B cell (primary cell): ENCODE measurements at regions of chr3 and their contacts with region 1.

Region 1: DNA sequence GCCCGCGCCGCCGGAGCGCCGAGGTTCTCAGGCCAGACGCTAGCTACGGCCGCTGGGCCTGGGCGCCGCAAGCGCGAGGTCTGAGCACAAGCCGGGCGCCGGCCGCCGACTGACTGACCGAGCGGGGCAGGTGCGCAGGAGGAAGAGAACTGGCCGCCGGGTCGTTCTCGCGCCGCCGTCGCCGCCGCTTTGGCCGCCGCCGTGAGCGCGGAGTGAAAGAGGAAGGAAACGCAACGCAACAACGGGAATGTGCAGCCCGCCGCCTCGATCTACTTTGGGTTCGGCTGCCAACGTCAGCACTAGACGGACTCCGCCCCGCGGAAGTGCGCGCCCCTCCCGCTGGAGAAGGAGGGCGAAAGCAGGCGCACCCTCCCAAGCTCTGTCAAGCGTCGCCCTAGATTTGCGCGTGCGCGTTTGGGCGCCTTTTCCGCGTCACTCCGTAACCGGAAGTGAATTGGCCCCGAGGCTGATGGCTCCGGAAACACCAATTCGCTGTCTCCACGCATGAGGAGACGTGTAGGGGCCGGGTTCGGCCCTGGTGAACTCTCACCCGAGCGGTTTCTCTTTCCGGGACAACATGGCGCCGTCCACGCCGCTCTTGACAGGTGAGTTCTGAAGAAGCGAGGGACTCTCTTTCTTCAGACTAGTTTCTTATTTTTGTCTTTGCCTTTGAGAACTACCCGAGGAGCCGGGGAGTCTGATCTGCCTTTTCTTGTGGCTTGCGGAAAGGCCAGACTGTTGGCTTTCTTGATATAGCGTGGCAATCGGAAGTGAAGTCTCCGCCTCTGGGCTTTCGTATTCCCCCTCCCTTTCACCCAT is at the starts of genes EIF2A and SERP1:
- DNase-seq: peak; percentile 100
- ATAC-seq: peak; percentile 90
- H3K4me3 ChIP-seq: peak within 1 kb of the TSS; percentile 67 to 96 (median 86)
- H3K4me3 Mint-ChIP-seq: peak within 1 kb of the TSS; percentile 93
- H3K27ac ChIP-seq: peak within 1 kb of the TSS; percentile 87 to 98
- H3K27ac Mint-ChIP-seq: peak within 1 kb of the TSS; percentile 99
- H3K4me1 ChIP-seq: peaks cover 11 to 21% of the 10 kb centered on the region in 2 donors
- H3K4me1 Mint-ChIP-seq: peaks cover 47% of the 10 kb centered on the region
- H3K27me3 ChIP-seq: no peaks in the 10 kb centered on the region
- H3K27me3 Mint-ChIP-seq: no peaks in the 10 kb centered on the region
- CTCF ChIP-seq: no peak
- total RNA-seq, gene EIF2A: 78.8 and 83.1 TPM in 2 replicates
- total RNA-seq, gene SERP1: 78.0 and 84.6 TPM in 2 replicates

Region 2: GRCh38 chr3:150384296-150385212 is 161.9 kb before region 1 on chr3:
- CTCF ChIA-PET with region 1: interaction called, 3 read pairs
- POLR2A ChIA-PET with region 1: no interaction called
- intact Hi-C with region 1: loop called (anchors 1 kb)
- DNase-seq: peak; percentile 89
- ATAC-seq: peak; percentile 94
- H3K4me3 ChIP-seq: peak overlapping the region; percentile 31 to 58 (median 44)
- H3K4me3 Mint-ChIP-seq: peak overlapping the region; percentile 78
- H3K27ac ChIP-seq: peak overlapping the region; percentile 85 to 89
- H3K27ac Mint-ChIP-seq: peak overlapping the region; percentile 86
- H3K4me1 ChIP-seq: peaks cover 20 to 26% of the 10 kb centered on the region in 2 donors
- H3K4me1 Mint-ChIP-seq: peaks cover 38% of the 10 kb centered on the region
- H3K27me3 ChIP-seq: no peaks in the 10 kb centered on the region
- H3K27me3 Mint-ChIP-seq: no peaks in the 10 kb centered on the region
- CTCF ChIP-seq: peak; percentile 60

Region 3: DNA sequence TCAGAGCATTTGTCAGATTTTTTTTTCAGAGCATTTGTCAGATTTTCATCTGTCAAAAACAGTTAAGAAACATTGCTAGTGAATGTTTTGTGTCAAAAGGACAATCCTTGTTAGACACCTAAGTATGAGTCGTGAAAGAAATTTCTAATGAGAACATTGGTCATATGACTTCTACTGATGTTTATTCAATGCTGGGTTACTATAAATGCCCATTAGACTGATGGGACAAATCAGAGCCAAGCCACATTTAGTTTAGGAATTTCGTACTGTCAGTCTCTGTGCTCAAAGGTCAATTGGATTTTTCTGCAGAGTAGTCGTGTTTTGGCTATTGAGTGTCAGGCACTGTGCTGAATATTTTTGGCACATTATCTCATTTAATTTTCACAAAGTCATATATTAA is 106.8 kb before region 1 on chr3:
- CTCF ChIA-PET with region 1: no interaction called
- POLR2A ChIA-PET with region 1: no interaction called
- intact Hi-C with region 1: no loop called
- DNase-seq: no peak
- ATAC-seq: no peak
- H3K4me3 ChIP-seq: no peak overlapping the region
- H3K4me3 Mint-ChIP-seq: no peak overlapping the region
- H3K27ac ChIP-seq: no peak overlapping the region
- H3K27ac Mint-ChIP-seq: no peak overlapping the region
- H3K4me1 ChIP-seq: no peaks in the 10 kb centered on the region
- H3K4me1 Mint-ChIP-seq: peaks cover 13% of the 10 kb centered on the region
- H3K27me3 ChIP-seq: no peaks in the 10 kb centered on the region
- H3K27me3 Mint-ChIP-seq: no peaks in the 10 kb centered on the region
- CTCF ChIP-seq: no peak

Region 4: DNA sequence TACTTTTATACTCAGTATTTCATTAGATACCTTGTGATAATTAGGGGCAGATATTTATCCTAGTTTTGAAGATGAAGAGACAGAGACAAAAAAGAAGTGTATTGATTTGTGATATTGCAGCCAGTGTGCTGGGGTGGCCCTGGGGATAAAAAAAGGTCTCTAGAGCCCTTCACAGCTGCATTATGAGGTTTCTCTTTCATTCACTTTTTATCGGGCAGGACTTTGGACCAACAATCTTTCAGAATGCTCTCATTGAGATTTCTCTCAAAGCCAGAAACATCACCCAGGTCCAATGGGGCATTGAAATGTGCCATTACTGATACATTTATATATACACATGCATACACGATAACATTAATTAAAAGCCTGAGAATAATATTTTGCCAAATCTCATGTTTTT is 36.2 kb after region 1 on chr3:
- CTCF ChIA-PET with region 1: interaction called, 4 read pairs
- POLR2A ChIA-PET with region 1: no interaction called
- intact Hi-C with region 1: loop called (anchors 5 kb)
- DNase-seq: no peak
- ATAC-seq: no peak
- H3K4me3 ChIP-seq: no peak overlapping the region
- H3K4me3 Mint-ChIP-seq: no peak overlapping the region
- H3K27ac ChIP-seq: no peak overlapping the region
- H3K27ac Mint-ChIP-seq: peak overlapping the region; percentile 20
- H3K4me1 ChIP-seq: no peaks in the 10 kb centered on the region
- H3K4me1 Mint-ChIP-seq: peaks cover 5% of the 10 kb centered on the region
- H3K27me3 ChIP-seq: no peaks in the 10 kb centered on the region
- H3K27me3 Mint-ChIP-seq: no peaks in the 10 kb centered on the region
- CTCF ChIP-seq: no peak

Region 5: DNA sequence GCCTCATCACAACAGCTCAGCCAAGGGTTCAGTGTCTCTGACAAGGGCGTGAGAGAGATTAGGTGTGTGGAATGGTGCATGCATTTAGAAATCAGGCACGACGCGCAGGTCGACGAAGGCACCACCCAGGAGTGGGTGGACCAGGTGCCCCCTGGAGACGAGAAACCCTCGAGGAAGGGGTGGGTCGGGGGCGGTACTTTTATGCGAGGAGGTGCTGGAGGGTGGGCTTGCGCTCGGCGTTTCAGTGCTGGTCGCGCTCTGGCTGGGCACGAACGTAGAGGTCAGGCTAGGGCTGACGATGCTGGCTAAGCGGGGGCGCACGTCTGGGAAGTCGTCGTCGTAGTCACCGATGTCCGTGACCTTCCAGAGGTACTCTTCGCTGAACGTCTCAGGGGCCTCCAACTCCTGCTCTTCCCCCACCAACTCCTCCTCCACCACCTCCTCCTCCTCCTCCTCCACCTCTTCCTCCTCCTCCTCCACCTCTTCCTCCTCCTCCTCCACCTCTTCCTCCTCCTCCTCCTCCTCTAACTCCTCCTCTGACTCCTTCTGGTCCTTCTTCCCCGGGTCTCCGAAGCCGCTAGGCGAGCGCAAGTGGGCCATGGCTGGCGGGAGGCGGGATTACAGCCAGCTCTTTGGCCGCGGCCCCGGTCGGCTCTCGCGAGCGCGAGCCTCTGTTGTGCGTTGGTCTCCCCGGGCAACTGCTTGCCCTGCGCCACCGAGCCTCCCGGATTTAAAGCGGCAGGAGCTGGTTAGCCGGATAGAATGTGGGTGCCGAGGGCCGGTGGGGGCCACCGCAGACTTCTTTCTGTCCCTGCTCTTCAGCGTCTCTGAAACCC is 157.1 kb after region 1 on chr3 and contains the start of gene ERICH6:
- CTCF ChIA-PET with region 1: interaction called, 3 read pairs
- POLR2A ChIA-PET with region 1: interaction called, 7 read pairs
- intact Hi-C with region 1: loop called (anchors 1 kb)
- DNase-seq: peak; percentile 93
- ATAC-seq: peak; percentile 92
- H3K4me3 ChIP-seq: peak within 1 kb of the TSS; percentile 68 to 88 (median 76)
- H3K4me3 Mint-ChIP-seq: peak within 1 kb of the TSS; percentile 98
- H3K27ac ChIP-seq: peak within 1 kb of the TSS; percentile 84 to 97
- H3K27ac Mint-ChIP-seq: peak within 1 kb of the TSS; percentile 97
- H3K4me1 ChIP-seq: peaks cover 0 to 13% of the 10 kb centered on the region in 2 donors
- H3K4me1 Mint-ChIP-seq: peaks cover 16% of the 10 kb centered on the region
- H3K27me3 ChIP-seq: no peaks in the 10 kb centered on the region
- H3K27me3 Mint-ChIP-seq: no peaks in the 10 kb centered on the region
- CTCF ChIP-seq: no peak
- total RNA-seq, gene ERICH6: 0.44 TPM in 1 of 2 replicates, not detected in the other

Region 6: DNA sequence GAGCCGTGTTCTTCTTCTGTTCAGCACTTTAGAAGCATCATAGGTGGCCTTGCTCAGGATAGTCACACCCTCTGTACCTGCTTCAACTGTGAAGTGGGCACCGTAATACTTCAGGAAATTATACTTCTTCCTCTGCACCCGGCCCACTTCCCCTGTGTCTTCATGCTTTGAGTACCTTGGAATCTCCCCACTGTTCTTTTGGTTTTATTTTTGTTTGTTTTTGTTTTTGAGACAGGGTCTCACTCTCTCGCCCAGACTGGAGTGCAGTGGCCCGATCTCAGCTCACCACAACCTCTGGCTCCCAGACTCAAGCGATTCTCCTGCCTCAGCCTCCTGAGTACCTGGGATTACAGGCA is 730.2 kb after region 1 on chr3:
- CTCF ChIA-PET with region 1: no interaction called
- POLR2A ChIA-PET with region 1: no interaction called
- intact Hi-C with region 1: loop called (anchors 5 kb)
- DNase-seq: peak; percentile 89
- ATAC-seq: peak; percentile 70
- H3K4me3 ChIP-seq: peak overlapping the region in 4 of 5 experiments; percentile 19 to 57 (median 48)
- H3K4me3 Mint-ChIP-seq: peak overlapping the region; percentile 82
- H3K27ac ChIP-seq: peak overlapping the region; percentile 91 to 96
- H3K27ac Mint-ChIP-seq: peak overlapping the region; percentile 98
- H3K4me1 ChIP-seq: peaks cover 69 to 76% of the 10 kb centered on the region in 2 donors
- H3K4me1 Mint-ChIP-seq: peaks cover 78% of the 10 kb centered on the region
- H3K27me3 ChIP-seq: no peaks in the 10 kb centered on the region
- H3K27me3 Mint-ChIP-seq: no peaks in the 10 kb centered on the region
- CTCF ChIP-seq: no peak